Activated CD4-positive, alpha-beta T cell treated with anti-CD3 and anti-CD28 coated beads, Interleukin-2, amount 10 ng/mL, durations not matched to agents 24 days and 14 days (primary cell): ENCODE measurements at regions of chr20 and their contacts with region 1.

Region 1: GRCh38 chr20:4108495-4109306 is 93.3 kb upstream of the RNF24 start:
- DNase-seq: peak; percentile 91
- H3K4me3 Mint-ChIP-seq: no peak overlapping the region
- H3K27ac Mint-ChIP-seq: peak overlapping the region; percentile 82
- H3K4me1 Mint-ChIP-seq: peaks cover 30% of the 10 kb centered on the region
- H3K27me3 Mint-ChIP-seq: peaks cover 4% of the 10 kb centered on the region

Region 2: GRCh38 chr20:4130404-4131189 is 21.9 kb after region 1 on chr20:
- intact Hi-C with region 1: loop called (anchors 1 kb)
- DNase-seq: peak; percentile 90
- H3K4me3 Mint-ChIP-seq: peak overlapping the region; percentile 62
- H3K27ac Mint-ChIP-seq: peak overlapping the region; percentile 89
- H3K4me1 Mint-ChIP-seq: peaks cover 46% of the 10 kb centered on the region
- H3K27me3 Mint-ChIP-seq: peaks cover 4% of the 10 kb centered on the region

Region 3: DNA sequence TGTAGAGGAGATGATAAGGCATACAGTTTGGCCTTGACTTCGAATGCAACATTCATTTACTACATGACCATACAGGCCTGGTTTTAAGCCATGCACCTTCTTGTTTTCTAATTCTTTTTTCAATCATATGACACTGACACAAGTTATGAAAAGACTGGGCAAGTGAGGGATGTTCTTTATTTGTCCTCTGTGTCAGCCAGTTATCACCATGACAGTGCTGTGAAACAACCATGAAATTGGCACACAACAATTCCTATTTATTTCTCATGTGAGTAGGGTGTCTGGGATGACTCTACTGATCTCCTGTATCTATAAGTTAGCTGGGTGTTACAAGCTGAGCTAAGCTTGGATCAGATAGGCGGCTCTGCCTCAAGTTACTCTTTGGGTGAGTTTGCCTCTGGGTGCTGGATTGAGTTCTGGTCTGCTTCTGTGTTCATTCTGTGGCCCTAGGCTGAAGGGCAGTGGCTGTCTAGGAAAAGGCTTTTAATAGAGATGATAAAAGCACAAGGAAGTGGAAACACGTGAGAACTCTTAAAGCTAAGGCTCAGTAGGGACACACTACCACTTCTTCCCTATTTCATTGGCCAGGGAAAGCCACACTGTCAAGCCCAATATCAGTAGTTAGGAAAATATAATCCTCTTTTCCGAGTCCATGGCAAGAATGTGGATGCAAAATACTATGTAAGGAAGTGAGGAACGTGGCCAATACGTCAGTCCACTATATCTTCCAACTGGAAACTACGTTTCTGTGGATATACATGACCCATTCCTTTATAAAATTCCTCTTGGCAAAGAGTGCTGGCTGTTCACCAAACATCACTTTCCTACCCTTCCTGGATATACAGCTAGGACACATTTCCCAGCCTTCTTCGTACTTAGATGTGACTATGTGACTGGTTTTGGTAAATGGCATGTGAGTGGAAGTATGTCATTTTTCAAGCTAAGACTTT is 32.9 kb after region 1 on chr20:
- intact Hi-C with region 1: no loop called
- DNase-seq: no peak
- H3K4me3 Mint-ChIP-seq: no peak overlapping the region
- H3K27ac Mint-ChIP-seq: no peak overlapping the region
- H3K4me1 Mint-ChIP-seq: peaks cover 3% of the 10 kb centered on the region
- H3K27me3 Mint-ChIP-seq: peaks cover 2% of the 10 kb centered on the region

Region 4: GRCh38 chr20:4592316-4593148 is 483.8 kb after region 1 on chr20:
- intact Hi-C with region 1: loop called (anchors 2 kb)
- DNase-seq: peak; percentile 88
- H3K4me3 Mint-ChIP-seq: peak overlapping the region; percentile 67
- H3K27ac Mint-ChIP-seq: no peak overlapping the region
- H3K4me1 Mint-ChIP-seq: peaks cover 4% of the 10 kb centered on the region
- H3K27me3 Mint-ChIP-seq: peaks cover 34% of the 10 kb centered on the region